Calu3 (cell line): ENCODE measurements at regions of chr2 and their contacts with region 1.

Region 1: GRCh38 chr2:64797881-64798575 is 144.3 kb upstream of the SERTAD2 start:
- DNase-seq: peak; percentile 64
- H3K4me3 Mint-ChIP-seq: no peak overlapping the region
- H3K27ac Mint-ChIP-seq: peak overlapping the region; percentile 43
- H3K4me1 Mint-ChIP-seq: peaks cover 5% of the 10 kb centered on the region
- H3K27me3 Mint-ChIP-seq: no peaks in the 10 kb centered on the region
- CTCF ChIP-seq: no peak

Region 2: DNA sequence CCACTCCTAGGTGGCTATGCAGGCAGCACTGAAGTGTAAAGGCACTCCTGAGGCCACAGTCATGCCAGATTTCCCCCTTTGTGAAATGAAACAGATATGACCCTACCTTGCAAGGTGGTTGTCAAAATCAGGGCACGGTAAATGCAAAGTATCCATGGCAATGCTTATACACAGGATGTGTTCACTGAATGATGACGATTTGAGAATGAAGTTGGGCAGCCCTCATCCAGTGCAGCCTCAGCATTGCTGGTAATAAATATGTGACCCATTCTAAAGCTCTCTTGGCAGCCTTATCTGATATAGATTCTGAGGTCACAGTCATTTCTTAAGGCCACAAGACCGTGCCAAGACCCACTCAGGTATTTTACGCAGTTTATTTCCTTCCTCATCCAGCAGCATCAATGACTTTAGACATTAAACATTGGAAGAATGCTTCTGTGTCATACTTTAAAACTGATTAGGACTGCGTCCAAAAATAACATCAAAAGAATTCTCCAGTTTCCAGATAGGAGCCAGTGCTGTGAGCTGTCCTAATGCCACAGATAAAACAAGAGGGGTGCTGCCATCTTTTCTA is 18.8 kb before region 1 on chr2:
- CTCF ChIA-PET with region 1: interaction called, 6 read pairs
- intact Hi-C with region 1: loop called (anchors 2 kb)
- DNase-seq: peak; percentile 61
- H3K4me3 Mint-ChIP-seq: no peak overlapping the region
- H3K27ac Mint-ChIP-seq: peak overlapping the region; percentile 34
- H3K4me1 Mint-ChIP-seq: peaks cover 48% of the 10 kb centered on the region
- H3K27me3 Mint-ChIP-seq: no peaks in the 10 kb centered on the region
- CTCF ChIP-seq: no peak